ENCODE measurements at regions of chr11 and their contacts with region 1.

Region 1: DNA sequence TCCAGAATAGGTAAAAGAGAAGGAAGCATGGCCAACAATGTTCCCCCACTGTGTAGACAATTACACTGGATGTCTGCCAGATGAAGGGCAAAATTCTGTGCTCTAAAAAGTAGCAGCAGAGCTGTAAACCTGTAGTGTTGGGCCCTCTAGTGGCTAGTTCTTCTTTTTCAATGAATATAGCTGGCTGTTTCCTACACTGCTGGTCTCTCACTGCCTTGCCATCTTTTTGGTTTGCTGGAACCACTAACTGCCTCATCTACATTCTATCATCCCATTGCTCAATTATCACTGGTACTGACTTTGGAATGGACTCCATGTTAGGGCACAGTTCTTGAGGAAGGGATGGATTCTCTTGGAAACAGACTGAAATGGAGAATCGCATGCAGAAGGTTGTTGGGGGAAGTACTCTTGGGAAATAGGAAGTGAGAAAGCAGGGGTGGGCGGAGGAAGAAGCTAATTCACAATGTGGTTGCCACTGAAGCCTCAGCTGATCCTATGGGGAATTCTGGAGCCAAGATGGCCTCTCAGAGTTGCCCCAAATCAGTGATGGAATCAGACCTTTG is 17.9 kb downstream of the KCNE3 start:
- DNase-seq: peak in 2 of 5 donors; percentile 53 to 70
- ATAC-seq: peak; percentile 82 to 89 (median 87)
- H3K4me3 ChIP-seq: no peak overlapping the region
- H3K27ac ChIP-seq: no peak overlapping the region
- H3K4me1 ChIP-seq: peaks cover 0 to 6% (median 0%) of the 10 kb centered on the region in 12 donors
- H3K27me3 ChIP-seq: peaks cover 0 to 6% (median 0%) of the 10 kb centered on the region in 9 donors
- CTCF ChIP-seq: peak; percentile 48 to 83 (median 77)
- POLR2A ChIP-seq: no peak

Region 2: DNA sequence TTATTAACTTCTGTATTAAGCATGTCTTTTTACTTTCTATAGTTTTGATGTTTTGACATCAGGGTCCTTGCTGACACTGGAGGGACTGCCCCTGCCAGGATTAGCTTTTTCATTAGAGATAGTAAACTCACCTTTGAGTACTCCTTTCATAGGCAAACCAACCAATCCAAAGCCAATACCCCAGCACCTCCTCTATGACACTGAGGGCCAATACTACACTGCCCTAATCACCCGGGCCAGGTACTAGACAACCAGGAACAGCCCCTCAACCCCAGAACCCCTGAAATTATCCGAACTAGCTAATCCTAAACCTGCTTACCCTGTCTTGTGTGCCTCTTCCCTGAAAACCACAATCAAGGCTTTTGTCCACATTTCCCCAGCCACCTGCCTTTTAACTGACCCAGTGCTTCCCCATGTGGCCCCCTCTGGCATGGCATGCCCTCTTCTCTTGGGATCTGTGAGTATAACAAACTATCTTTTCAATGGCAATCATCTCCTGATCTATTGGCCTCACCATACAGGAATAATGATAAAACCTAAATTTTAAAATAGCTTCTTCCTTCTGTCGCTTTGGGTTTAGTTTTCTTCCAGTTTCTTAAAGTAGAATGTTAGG is 719.8 kb before region 1 on chr11:
- intact Hi-C with region 1: no loop called
- DNase-seq: no peak
- ATAC-seq: no peak
- H3K4me3 ChIP-seq: no peak overlapping the region
- H3K27ac ChIP-seq: no peak overlapping the region
- H3K4me1 ChIP-seq: peaks cover 0 to 4% (median under 1%) of the 10 kb centered on the region in 12 donors
- H3K27me3 ChIP-seq: no peaks in the 10 kb centered on the region
- CTCF ChIP-seq: peak in 6 of 12 donors; percentile 9 to 38 (median 32)
- POLR2A ChIP-seq: no peak

Region 3: DNA sequence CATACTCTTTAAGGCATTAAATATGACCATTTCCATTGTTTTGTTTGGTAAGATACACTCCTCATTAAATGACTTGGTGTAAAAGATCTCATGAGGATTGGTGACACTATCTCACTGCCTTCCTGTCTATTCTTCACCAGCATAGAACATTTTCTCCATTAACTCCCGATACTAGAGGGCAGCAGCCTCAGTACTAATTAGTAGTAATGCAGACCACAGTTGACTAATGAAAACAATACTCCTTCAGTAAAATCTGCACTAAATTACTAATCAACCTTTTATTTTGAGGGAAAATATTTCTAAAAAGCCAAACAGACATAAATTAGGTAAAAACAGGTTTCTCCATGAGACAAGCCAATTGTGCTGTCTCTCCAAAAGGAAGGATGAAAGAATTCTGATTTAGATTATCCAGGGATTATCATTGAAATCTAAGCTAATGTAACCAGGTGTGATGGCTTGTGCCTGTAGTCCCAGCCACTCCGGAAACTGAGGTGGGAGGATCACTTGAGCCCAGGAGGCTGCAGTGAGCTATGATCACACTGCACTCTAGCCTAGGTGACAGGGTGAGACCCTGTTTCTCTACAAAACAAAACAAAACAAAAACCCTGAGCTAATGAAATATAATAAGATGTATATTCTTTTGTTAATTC is 60.6 kb before region 1 on chr11:
- intact Hi-C with region 1: loop called in 9 of 10 experiments (anchors 1 to 5 kb)
- DNase-seq: peak in 4 of 5 donors; percentile 22 to 48 (median 38)
- ATAC-seq: peak in 3 of 4 donors; percentile 69 to 81 (median 74)
- H3K4me3 ChIP-seq: no peak overlapping the region
- H3K27ac ChIP-seq: no peak overlapping the region
- H3K4me1 ChIP-seq: peaks cover 0 to 5% (median 0%) of the 10 kb centered on the region in 12 donors
- H3K27me3 ChIP-seq: no peaks in the 10 kb centered on the region
- CTCF ChIP-seq: peak; percentile 54 to 85 (median 72)
- POLR2A ChIP-seq: no peak

Region 4: GRCh38 chr11:74398244-74399159 is 50.9 kb before region 1 on chr11 and contains the start of gene PGM2L1:
- intact Hi-C with region 1: loop called in 1 of 10 experiments (anchors 2 kb)
- DNase-seq: peak; percentile 94 to 96 (median 96)
- ATAC-seq: peak; percentile 99
- H3K4me3 ChIP-seq: peak within 1 kb of the TSS; percentile 69 to 94 (median 81)
- H3K27ac ChIP-seq: peak within 1 kb of the TSS in 11 of 12 donors; percentile 69 to 94 (median 85)
- H3K4me1 ChIP-seq: peaks cover 0 to 9% (median 5%) of the 10 kb centered on the region in 12 donors
- H3K27me3 ChIP-seq: no peaks in the 10 kb centered on the region
- CTCF ChIP-seq: no peak
- POLR2A ChIP-seq: peak in 1 of 2 donors; percentile 54
- total RNA-seq, gene PGM2L1: 1.4 to 3.1 (median 1.8) TPM

Region 5: DNA sequence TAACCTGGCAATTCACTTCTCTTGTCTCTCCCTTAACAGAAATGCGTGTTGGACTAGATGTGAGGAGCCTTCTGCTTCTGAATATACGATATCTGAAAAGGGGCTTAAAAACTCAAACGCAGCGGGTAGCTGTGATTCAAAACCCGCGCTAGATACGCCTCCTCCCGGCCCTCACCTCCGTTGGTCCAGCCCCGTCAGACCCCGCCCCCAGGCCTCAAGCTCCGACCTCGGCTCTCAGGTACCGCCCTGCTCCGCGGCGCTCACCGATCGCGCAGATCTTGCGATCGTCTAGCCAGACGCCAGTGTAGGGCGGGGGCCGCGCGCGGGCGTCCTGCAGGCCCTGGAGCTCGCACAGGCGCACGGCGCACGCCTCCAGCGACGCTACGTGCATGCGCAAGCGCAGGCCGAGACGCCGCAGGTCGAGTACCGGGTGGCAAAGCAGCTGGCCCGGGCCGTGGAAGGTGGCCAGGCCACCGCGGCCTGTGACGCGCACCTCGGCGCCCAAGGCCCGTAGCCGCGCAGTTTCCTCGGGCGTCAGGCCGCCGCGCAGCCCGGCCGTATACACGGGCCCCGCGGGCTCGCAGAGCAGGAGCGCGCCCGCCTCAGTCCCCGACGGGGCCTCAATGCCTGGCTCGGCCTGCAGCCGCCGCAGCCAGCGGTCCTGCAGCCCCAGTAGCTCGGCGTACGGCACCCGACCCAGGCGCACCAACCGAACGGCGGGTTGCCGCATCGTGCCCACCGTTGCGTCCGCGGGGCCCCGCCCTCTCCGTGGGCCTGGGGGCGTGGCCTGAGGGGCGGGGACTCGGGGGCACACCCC is 43.7 kb after region 1 on chr11 and contains the start of gene LIPT2:
- intact Hi-C with region 1: loop called in 1 of 10 experiments (anchors 5 kb)
- DNase-seq: peak; percentile 96 to 98 (median 98)
- ATAC-seq: peak; percentile 99 to 100 (median 100)
- H3K4me3 ChIP-seq: peak within 1 kb of the TSS; percentile 79 to 98 (median 92)
- H3K27ac ChIP-seq: peak within 1 kb of the TSS; percentile 89 to 100 (median 99)
- H3K4me1 ChIP-seq: peaks cover 0 to 18% (median 12%) of the 10 kb centered on the region in 12 donors
- H3K27me3 ChIP-seq: no peaks in the 10 kb centered on the region
- CTCF ChIP-seq: no peak
- POLR2A ChIP-seq: peak in 1 of 2 donors; percentile 87
- total RNA-seq, gene LIPT2: 0.93 to 3.9 (median 1.6) TPM

Region 6: GRCh38 chr11:74570266-74571061 is 121.0 kb after region 1 on chr11:
- intact Hi-C with region 1: loop called (anchors 1 to 5 kb)
- DNase-seq: peak in 4 of 5 donors; percentile 13 to 36 (median 32)
- ATAC-seq: peak in 3 of 4 donors; percentile 70 to 87 (median 85)
- H3K4me3 ChIP-seq: no peak overlapping the region
- H3K27ac ChIP-seq: no peak overlapping the region
- H3K4me1 ChIP-seq: no peaks in the 10 kb centered on the region
- H3K27me3 ChIP-seq: no peaks in the 10 kb centered on the region
- CTCF ChIP-seq: peak; percentile 60 to 77 (median 70)
- POLR2A ChIP-seq: no peak

Measured in heart left ventricle (tissue), 16 donors.